ENCODE measurements at regions of chr2 and their contacts with region 1.

Region 1: GRCh38 chr2:15577071-15577735 is 14.5 kb upstream of the DDX1 start:
- DNase-seq: peak; percentile 72

Region 2: DNA sequence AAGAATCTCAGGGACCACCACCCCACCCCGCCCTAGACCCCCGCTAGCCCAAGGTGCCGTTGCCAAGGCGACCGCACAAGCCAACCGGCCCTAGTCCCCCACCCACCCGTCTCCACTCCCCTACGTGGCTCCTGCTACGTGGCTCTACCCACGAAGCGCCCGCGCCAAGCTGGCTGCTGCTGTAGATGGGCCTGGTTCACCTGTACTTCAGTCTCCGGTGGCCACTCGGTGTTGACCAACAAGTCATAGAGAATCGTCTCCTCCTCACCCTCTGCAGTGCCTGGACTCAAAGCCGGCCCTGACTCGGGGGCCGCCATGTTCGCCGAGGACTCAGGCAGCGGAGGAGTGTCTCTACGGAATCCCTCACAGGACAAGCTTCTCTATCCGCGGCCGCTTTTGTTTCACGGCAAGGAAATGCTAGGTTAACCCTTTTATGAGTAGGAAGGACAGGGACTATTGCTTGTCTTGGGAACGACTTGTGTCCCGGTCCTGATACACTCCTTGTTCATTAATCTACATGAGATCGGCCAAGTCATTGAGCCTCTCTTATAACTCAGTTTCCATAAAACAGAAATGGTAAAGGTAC is 16.1 kb before region 1 on chr2 and contains the start of gene NBAS:
- CTCF ChIA-PET with region 1: interaction called, 12 read pairs
- POLR2A ChIA-PET with region 1: interaction called, 11 read pairs
- DNase-seq: peak; percentile 78

Region 3: GRCh38 chr2:15599994-15600393 is 22.8 kb after region 1 on chr2:
- CTCF ChIA-PET with region 1: no interaction called
- POLR2A ChIA-PET with region 1: no interaction called
- DNase-seq: no peak

Region 4: GRCh38 chr2:15763106-15763821 is 186.1 kb after region 1 on chr2:
- CTCF ChIA-PET with region 1: no interaction called
- POLR2A ChIA-PET with region 1: no interaction called
- DNase-seq: no peak

Region 5: GRCh38 chr2:16218625-16219024 is 641.4 kb after region 1 on chr2:
- CTCF ChIA-PET with region 1: no interaction called
- POLR2A ChIA-PET with region 1: no interaction called
- DNase-seq: peak; percentile 41